GM13977 (cell line): ENCODE measurements at regions of chr1 and their contacts with region 1.

Region 1: GRCh38 chr1:203702130-203702577 is 62.8 kb upstream of the LAX1 start:
- DNase-seq: peak; percentile 49
- CTCF ChIP-seq: peak; percentile 82

Region 2: GRCh38 chr1:203504397-203505250 is 197.5 kb before region 1 on chr1:
- in situ Hi-C with region 1: loop called (anchors 10 kb)
- DNase-seq: peak; percentile 87
- CTCF ChIP-seq: peak; percentile 79

Region 3: DNA sequence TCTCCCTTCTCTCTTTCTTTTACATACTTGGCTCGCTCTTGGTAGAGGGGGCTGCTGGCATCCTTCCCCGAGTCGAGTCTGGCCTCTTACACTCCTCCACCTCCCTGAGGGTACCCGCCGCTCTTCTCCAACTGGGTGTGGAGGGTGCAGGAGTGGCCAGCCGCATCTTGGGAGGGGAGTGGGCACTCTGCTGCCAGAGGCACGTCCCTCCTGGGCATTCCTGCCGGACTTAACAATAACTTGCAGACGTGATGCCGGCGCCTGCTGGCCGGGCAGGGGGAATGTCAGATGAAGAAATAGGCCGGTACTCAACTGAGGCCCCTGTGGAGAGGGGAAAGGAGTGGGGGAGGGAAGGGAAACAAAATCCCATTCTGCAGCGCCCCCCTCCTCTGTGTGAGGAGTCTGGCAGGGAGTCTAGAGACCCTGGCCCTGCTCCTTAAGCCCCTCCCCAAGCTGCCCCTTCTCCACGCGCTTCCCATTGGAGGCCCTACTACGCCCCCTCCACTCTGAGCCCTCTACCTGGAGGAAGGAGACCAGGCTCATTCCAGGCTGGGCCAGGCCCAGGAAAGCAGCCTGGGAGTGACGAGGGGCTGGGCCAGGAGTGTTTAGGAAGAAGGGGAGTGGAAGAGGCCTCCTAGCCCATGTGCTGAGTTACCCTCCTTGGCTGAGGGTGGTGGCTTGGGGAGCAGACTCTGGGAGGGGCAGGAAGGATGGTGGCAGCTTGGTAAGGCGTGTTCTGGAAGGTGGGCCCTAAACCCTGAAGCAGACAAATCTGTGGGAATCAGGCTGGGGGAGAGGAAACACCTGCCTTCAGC is 73.7 kb before region 1 on chr1:
- in situ Hi-C with region 1: no loop called
- DNase-seq: no peak
- CTCF ChIP-seq: no peak

Region 4: DNA sequence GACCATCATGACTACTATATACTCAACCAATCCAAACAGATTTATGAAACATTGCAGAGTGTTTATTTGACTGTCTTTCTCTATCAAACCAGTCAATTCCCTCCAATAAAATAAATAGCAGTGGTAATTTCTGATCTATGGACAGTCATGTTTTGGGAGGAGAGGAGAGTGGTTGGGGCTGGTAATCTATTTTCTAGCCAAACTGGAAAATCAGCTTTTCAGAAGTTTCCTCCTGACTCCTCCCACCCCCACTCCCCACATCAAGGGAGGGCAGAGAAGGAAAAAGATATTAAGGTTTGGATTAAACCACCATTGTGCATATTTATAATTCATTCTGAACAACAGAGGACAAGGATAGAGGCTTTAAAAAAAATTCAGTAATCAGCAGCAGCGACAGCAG is 301.4 kb after region 1 on chr1:
- in situ Hi-C with region 1: no loop called
- DNase-seq: no peak
- CTCF ChIP-seq: no peak